Activated naive CD4-positive, alpha-beta T cell treated with anti-CD3 and anti-CD28 coated beads for 36 hours (primary cell): ENCODE measurements at regions of chr3 and their contacts with region 1.

Region 1: DNA sequence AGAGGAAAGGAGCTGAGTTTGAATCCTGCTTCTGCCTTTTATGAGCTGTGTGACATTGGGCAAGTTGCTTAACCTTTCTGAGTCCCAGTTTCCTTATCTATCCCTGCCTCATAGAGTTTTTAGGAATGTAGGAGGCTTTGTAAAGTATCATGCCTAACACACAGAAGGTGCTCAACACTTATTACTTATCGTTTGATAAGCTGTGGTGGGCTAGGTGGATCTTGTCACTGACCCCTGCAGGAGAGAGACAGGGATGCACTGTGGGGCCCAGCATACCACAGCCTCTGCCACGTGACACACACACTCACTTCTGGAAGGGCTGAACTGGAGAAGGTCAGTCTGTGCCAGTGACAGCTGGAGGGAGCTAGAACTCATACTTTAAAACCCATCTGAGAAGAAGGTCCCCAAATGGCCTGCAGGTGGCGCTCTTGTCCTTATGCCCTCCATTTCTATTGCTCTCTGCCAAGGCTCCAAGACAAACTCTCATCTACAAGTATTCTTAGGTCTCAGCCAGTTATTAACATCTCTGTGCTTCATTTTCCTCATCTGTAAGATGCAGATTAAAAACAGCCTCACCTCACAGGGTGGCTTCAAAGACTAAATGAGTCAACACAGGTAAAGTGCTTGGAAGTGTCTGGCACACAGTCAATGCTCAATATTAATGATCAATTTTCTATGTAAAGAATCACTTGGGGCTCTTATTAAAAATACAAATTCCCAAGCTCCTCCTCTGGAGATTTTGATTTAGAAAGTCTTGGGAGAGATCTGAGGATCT is 57.5 kb upstream of the HACD2 start:
- DNase-seq: peak; percentile 83
- H3K4me3 Mint-ChIP-seq: no peak overlapping the region
- H3K27ac Mint-ChIP-seq: no peak overlapping the region
- H3K4me1 Mint-ChIP-seq: no peaks in the 10 kb centered on the region
- H3K27me3 Mint-ChIP-seq: no peaks in the 10 kb centered on the region

Region 2: GRCh38 chr3:123559040-123559861 is 83.1 kb before region 1 on chr3:
- CTCF ChIA-PET with region 1: no interaction called
- intact Hi-C with region 1: no loop called
- DNase-seq: no peak
- H3K4me3 Mint-ChIP-seq: no peak overlapping the region
- H3K27ac Mint-ChIP-seq: no peak overlapping the region
- H3K4me1 Mint-ChIP-seq: peaks cover 18% of the 10 kb centered on the region
- H3K27me3 Mint-ChIP-seq: no peaks in the 10 kb centered on the region

Region 3: DNA sequence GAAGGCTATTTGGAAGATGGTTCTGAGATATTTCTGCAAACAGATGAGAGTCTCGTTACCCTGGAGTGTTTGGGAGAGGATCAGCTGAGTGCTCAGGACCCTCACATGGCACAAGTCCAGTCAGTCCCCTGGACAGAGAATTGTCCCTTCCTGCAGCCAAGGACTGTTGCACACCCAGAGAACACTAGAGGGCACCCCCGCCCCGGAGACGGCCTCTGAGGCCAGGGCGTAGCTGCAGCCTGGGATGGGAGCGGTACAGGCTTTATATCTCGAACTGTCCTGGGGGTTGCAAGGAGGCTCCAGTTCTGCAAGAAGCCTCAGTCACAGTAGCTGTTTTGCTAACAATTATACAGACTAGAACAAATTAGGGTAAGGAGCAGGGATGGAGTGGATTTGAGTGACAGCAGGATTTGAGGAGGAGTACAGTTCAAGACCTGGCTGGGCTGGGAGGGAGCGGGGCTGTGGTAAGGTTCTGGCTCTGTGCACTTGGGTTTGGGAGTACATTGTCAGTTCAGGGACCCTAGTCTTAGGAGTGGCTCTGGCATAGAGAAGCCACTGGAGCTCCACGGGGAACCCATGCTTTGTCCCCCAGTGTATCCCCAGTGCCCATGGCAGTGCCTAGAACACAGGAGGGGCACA is 10.1 kb after region 1 on chr3:
- CTCF ChIA-PET with region 1: interaction called, 46 read pairs
- intact Hi-C with region 1: no loop called
- DNase-seq: peak; percentile 63
- H3K4me3 Mint-ChIP-seq: no peak overlapping the region
- H3K27ac Mint-ChIP-seq: no peak overlapping the region
- H3K4me1 Mint-ChIP-seq: no peaks in the 10 kb centered on the region
- H3K27me3 Mint-ChIP-seq: peaks cover 2% of the 10 kb centered on the region

Region 4: GRCh38 chr3:123702720-123703119 is 60.4 kb after region 1 on chr3:
- CTCF ChIA-PET with region 1: interaction called, 3 read pairs
- intact Hi-C with region 1: loop called (anchors 1 kb)
- DNase-seq: no peak
- H3K4me3 Mint-ChIP-seq: no peak overlapping the region
- H3K27ac Mint-ChIP-seq: no peak overlapping the region
- H3K4me1 Mint-ChIP-seq: no peaks in the 10 kb centered on the region
- H3K27me3 Mint-ChIP-seq: no peaks in the 10 kb centered on the region

Region 5: GRCh38 chr3:123723522-123724168 is 81.3 kb after region 1 on chr3:
- CTCF ChIA-PET with region 1: interaction called, 12 read pairs
- intact Hi-C with region 1: loop called (anchors 1 kb)
- DNase-seq: peak; percentile 71
- H3K4me3 Mint-ChIP-seq: no peak overlapping the region
- H3K27ac Mint-ChIP-seq: no peak overlapping the region
- H3K4me1 Mint-ChIP-seq: no peaks in the 10 kb centered on the region
- H3K27me3 Mint-ChIP-seq: peaks cover 15% of the 10 kb centered on the region

Region 6: GRCh38 chr3:123893012-123893411 is 250.6 kb after region 1 on chr3:
- CTCF ChIA-PET with region 1: no interaction called
- intact Hi-C with region 1: no loop called
- DNase-seq: no peak
- H3K4me3 Mint-ChIP-seq: no peak overlapping the region
- H3K27ac Mint-ChIP-seq: no peak overlapping the region
- H3K4me1 Mint-ChIP-seq: no peaks in the 10 kb centered on the region
- H3K27me3 Mint-ChIP-seq: peaks cover 16% of the 10 kb centered on the region

Region 7: GRCh38 chr3:123986427-123986826 is 344.1 kb after region 1 on chr3:
- CTCF ChIA-PET with region 1: no interaction called
- intact Hi-C with region 1: loop called (anchors 10 kb)
- DNase-seq: no peak
- H3K4me3 Mint-ChIP-seq: no peak overlapping the region
- H3K27ac Mint-ChIP-seq: no peak overlapping the region
- H3K4me1 Mint-ChIP-seq: no peaks in the 10 kb centered on the region
- H3K27me3 Mint-ChIP-seq: peaks cover 31% of the 10 kb centered on the region

Region 8: DNA sequence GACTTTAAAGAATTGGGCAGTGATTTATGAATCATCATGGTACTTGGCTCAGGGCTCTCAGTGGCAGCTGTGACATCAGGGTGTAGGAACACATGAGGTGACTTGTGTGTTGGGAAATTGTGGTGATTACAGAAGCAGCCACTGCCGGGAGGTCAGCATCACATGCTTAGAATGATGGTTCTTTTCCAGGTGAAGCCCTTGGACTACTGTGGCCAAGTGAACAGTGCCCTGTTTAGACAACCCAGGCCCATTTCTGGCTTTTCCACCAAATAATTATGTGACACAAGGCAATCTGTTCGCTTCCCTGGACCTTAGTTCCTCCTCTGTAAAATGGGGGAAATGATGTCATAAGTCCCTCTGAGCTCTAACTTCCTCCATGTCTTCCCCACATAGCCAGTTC is 489.2 kb after region 1 on chr3:
- CTCF ChIA-PET with region 1: no interaction called
- intact Hi-C with region 1: no loop called
- DNase-seq: no peak
- H3K4me3 Mint-ChIP-seq: no peak overlapping the region
- H3K27ac Mint-ChIP-seq: no peak overlapping the region
- H3K4me1 Mint-ChIP-seq: no peaks in the 10 kb centered on the region
- H3K27me3 Mint-ChIP-seq: peaks cover 9% of the 10 kb centered on the region